Activated naive CD4-positive, alpha-beta T cell treated with anti-CD3 and anti-CD28 coated beads for 36 hours (primary cell): ENCODE measurements at regions of chr17 and their contacts with region 1.

Region 1: DNA sequence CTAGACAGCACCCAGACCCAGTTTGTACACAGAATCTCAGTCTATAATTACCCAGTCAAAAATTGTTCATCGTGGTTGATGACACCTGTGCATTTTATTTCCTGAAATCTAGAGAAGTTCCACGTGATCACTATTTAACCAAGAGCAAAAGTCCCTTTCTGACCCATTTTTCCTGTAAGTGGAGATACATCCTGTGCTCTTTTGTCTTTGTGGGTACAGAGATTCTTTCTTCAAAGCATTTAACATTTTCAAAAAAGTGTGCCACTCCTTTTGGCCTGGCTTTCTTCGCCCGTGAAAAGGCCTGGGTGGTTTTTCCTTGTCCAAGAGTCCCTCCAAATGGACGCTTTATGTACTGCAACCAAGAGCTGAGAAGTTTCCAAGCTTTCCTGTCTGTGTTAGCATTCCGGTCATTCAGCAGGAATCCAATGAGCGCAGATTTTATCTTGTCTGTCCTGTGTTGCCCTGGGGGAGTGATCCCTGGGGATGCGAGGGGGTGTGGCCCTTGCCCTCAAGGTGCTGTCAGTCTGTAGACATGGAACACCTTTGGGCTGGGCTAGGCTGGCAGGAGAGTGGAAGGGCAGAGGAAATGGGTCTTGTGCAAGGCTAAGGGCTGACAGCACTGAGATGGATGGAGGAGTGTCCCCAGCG is 161.1 kb upstream of the CACNG5 start:
- DNase-seq: peak; percentile 72
- H3K4me3 Mint-ChIP-seq: peak overlapping the region; percentile 20
- H3K27ac Mint-ChIP-seq: peak overlapping the region; percentile 88
- H3K4me1 Mint-ChIP-seq: peaks cover 77% of the 10 kb centered on the region
- H3K27me3 Mint-ChIP-seq: no peaks in the 10 kb centered on the region

Region 2: DNA sequence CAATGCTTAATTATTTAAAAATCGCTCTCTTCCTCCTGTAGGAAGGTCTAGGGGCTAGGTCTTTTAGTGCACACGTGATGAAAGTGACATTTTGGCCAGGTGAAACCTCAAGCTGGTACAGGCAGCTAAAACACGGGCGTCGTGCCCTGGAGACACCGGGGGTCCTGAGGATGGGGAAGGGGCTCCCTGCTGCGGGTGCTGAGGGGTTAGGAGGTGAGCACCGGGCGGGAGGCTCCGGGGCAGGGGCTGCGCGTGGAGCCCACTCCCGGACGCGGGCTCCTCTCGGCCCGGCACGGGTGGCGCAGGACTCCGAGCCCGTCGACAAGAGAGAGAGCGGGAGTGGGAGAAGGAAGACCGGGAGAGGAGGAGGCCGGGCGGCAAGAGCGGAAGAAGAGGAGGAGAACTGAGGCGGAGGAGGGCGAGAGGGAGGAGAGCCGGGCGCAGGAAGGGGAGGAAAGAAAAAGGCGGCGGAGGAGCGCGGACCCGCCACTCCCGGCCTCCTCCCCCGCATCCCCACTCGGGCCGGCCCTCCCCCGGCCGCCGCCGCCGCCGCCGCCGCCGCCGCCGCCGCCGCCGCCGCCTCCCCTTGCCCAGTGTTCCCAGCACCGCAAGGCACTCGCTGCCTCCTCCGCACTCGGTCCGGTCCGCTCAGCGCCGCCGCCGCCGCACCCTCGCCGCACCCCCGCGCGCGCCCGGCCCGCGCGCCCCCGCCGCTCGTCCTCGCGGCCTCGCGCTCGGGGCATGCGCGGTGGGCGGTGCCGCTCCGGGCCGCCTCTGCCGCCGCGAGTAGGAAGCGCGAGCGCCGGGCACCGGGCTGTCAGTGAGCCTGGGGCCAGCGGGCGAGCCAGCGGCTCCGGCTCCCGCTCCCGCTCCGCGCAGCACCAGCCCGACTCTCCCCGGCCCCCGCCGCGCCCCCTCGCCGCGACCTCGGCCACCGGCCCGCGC is 371.7 kb before region 1 on chr17 and contains the start of gene PRKCA:
- CTCF ChIA-PET with region 1: no interaction called
- intact Hi-C with region 1: loop called (anchors 2 kb)
- DNase-seq: peak; percentile 60
- H3K4me3 Mint-ChIP-seq: peak within 1 kb of the TSS; percentile 100
- H3K27ac Mint-ChIP-seq: peak within 1 kb of the TSS; percentile 95
- H3K4me1 Mint-ChIP-seq: peaks cover 28% of the 10 kb centered on the region
- H3K27me3 Mint-ChIP-seq: no peaks in the 10 kb centered on the region
- total RNA-seq, gene PRKCA: 78.4 to 79.7 TPM

Region 3: GRCh38 chr17:66426397-66427033 is 247.3 kb before region 1 on chr17:
- CTCF ChIA-PET with region 1: no interaction called
- intact Hi-C with region 1: loop called (anchors 5 kb)
- DNase-seq: peak; percentile 68
- H3K4me3 Mint-ChIP-seq: no peak overlapping the region
- H3K27ac Mint-ChIP-seq: peak overlapping the region; percentile 83
- H3K4me1 Mint-ChIP-seq: peaks cover 81% of the 10 kb centered on the region
- H3K27me3 Mint-ChIP-seq: no peaks in the 10 kb centered on the region

Region 4: DNA sequence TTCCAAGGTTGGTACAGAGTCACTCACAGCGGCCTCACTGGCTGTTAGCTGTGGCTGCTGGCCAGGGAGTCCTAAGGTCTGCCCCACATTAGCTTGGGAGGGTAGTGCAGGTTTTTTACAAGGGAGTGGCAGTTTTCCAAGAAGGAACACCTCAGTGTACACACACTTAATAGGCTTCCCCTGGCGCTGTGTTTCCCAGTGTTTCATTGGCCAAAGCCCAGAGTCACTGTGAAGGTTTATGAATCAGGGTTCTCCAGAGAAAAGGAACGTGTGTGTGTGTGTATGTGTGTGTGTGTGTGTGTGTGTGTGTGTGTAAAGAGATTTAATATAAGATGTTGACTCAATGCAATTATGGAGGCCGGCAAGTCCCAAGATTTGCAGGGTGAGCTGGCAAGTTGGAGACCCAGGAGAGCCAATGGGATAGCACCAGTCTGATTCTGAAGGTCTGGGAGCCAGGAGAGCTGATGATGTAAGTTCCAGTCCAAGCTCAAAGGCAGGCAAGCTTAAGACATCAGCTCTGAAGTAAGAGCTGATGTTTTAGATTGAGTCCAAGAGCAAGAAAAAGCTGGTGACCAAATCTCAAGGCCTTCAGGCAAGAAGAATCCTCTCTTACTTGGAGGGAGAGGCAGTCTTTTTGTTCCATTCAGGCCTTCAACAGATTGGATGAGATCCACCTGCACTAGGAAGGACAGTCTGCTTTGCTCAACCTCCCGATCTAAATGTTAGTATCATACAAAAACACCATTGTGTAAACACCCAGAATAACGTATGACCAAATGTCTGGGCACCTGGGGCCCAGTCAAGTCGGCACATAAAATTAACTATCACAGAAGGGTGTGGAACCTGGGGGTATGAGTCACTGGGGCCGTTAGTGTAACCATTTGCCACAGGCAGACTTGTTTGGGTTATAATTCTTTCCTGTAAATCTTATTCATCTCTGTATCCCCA is 164.6 kb before region 1 on chr17:
- CTCF ChIA-PET with region 1: interaction called, 3 read pairs
- intact Hi-C with region 1: loop called (anchors 2 kb)
- DNase-seq: peak; percentile 79
- H3K4me3 Mint-ChIP-seq: peak overlapping the region; percentile 39
- H3K27ac Mint-ChIP-seq: peak overlapping the region; percentile 90
- H3K4me1 Mint-ChIP-seq: peaks cover 85% of the 10 kb centered on the region
- H3K27me3 Mint-ChIP-seq: no peaks in the 10 kb centered on the region

Region 5: GRCh38 chr17:66567234-66568170 is 106.3 kb before region 1 on chr17:
- CTCF ChIA-PET with region 1: interaction called, 4 read pairs
- intact Hi-C with region 1: loop called (anchors 5 kb)
- DNase-seq: peak; percentile 89
- H3K4me3 Mint-ChIP-seq: no peak overlapping the region
- H3K27ac Mint-ChIP-seq: no peak overlapping the region
- H3K4me1 Mint-ChIP-seq: peaks cover 48% of the 10 kb centered on the region
- H3K27me3 Mint-ChIP-seq: no peaks in the 10 kb centered on the region

Region 6: DNA sequence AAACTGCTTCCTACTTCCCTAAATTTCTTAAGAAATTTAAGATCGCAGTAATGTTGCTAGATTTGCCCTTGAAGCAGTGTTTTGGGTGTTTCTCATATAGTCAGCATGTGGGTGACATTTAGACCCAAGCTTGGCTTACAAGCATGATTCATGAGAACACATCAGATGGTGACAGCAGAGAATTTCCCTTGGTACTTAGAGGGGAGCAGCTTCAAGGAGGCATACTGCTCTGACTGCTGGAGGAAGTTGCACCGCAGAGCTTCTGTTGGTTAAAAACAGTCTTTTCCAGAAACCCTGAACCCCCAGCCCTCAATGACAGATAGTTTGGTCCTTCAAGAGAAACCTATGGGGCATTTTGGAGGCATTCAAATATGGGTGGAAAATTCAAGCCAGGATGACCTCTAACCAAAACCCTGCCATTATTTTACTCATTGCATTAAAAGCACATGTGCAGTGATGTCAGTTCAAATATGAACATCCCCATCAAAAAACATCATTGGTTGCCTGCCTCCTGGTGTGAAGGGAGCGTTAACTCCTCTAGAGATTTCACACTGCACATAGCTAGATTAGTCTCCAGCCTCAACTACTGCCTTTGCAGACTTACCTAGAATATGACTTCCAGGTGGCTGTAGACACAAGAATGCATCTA is 40.4 kb before region 1 on chr17:
- CTCF ChIA-PET with region 1: no interaction called
- intact Hi-C with region 1: loop called (anchors 1 kb)
- DNase-seq: peak; percentile 78
- H3K4me3 Mint-ChIP-seq: no peak overlapping the region
- H3K27ac Mint-ChIP-seq: peak overlapping the region; percentile 44
- H3K4me1 Mint-ChIP-seq: peaks cover 62% of the 10 kb centered on the region
- H3K27me3 Mint-ChIP-seq: no peaks in the 10 kb centered on the region